Activated CD8-positive, alpha-beta T cell treated with anti-CD3 and anti-CD28 coated beads for 36 hours (primary cell): ENCODE measurements at regions of chr9 and their contacts with region 1.

Region 1: GRCh38 chr9:69186841-69187611 is 12.9 kb downstream of the TJP2 start:
- DNase-seq: no peak
- ATAC-seq: no peak
- H3K4me3 Mint-ChIP-seq: no peak overlapping the region
- H3K27ac Mint-ChIP-seq: peak overlapping the region; percentile 52
- H3K4me1 Mint-ChIP-seq: peaks cover 11% of the 10 kb centered on the region
- H3K27me3 Mint-ChIP-seq: no peaks in the 10 kb centered on the region
- CTCF ChIP-seq: no peak

Region 2: DNA sequence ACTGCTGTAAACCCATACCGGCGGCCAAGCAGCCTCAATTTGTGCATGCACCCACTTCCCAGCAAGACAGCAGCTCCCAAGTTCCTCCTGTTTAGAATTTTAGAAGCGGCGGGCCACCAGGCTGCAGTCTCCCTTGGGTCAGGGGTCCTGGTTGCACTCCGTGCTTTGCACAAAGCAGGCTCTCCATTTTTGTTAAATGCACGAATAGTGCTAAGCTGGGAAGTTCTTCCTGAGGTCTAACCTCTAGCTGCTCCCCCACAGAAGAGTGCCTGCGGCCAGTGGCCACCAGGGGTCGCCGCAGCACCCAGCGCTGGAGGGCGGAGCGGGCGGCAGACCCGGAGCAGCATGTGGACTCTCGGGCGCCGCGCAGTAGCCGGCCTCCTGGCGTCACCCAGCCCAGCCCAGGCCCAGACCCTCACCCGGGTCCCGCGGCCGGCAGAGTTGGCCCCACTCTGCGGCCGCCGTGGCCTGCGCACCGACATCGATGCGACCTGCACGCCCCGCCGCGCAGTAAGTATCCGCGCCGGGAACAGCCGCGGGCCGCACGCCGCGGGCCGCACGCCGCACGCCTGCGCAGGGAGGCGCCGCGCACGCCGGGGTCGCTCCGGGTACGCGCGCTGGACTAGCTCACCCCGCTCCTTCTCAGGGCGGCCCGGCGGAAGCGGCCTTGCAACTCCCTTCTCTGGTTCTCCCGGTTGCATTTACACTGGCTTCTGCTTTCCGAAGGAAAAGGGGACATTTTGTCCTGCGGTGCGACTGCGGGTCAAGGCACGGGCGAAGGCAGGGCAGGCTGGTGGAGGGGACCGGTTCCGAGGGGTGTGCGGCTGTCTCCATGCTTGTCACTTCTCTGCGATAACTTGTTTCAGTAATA is 151.4 kb before region 1 on chr9 and contains the start of gene FXN:
- CTCF ChIA-PET with region 1: interaction called, 9 read pairs
- POLR2A ChIA-PET with region 1: no interaction called
- intact Hi-C with region 1: loop called (anchors 5 kb)
- DNase-seq: peak; percentile 82
- ATAC-seq: peak; percentile 95
- H3K4me3 Mint-ChIP-seq: peak within 1 kb of the TSS; percentile 95
- H3K27ac Mint-ChIP-seq: peak within 1 kb of the TSS; percentile 93
- H3K4me1 Mint-ChIP-seq: peaks cover 22% of the 10 kb centered on the region
- H3K27me3 Mint-ChIP-seq: no peaks in the 10 kb centered on the region
- CTCF ChIP-seq: peak; percentile 98
- total RNA-seq, gene FXN: 21.0 to 21.8 TPM

Region 3: GRCh38 chr9:69044240-69045219 is 142.5 kb before region 1 on chr9:
- CTCF ChIA-PET with region 1: interaction called, 174 read pairs
- POLR2A ChIA-PET with region 1: no interaction called
- intact Hi-C with region 1: loop called (anchors 5 kb)
- DNase-seq: peak; percentile 45
- ATAC-seq: peak; percentile 87
- H3K4me3 Mint-ChIP-seq: no peak overlapping the region
- H3K27ac Mint-ChIP-seq: peak overlapping the region; percentile 59
- H3K4me1 Mint-ChIP-seq: peaks cover 19% of the 10 kb centered on the region
- H3K27me3 Mint-ChIP-seq: no peaks in the 10 kb centered on the region
- CTCF ChIP-seq: no peak